ENCODE measurements at regions of chr17 and their contacts with region 1.

Region 1: DNA sequence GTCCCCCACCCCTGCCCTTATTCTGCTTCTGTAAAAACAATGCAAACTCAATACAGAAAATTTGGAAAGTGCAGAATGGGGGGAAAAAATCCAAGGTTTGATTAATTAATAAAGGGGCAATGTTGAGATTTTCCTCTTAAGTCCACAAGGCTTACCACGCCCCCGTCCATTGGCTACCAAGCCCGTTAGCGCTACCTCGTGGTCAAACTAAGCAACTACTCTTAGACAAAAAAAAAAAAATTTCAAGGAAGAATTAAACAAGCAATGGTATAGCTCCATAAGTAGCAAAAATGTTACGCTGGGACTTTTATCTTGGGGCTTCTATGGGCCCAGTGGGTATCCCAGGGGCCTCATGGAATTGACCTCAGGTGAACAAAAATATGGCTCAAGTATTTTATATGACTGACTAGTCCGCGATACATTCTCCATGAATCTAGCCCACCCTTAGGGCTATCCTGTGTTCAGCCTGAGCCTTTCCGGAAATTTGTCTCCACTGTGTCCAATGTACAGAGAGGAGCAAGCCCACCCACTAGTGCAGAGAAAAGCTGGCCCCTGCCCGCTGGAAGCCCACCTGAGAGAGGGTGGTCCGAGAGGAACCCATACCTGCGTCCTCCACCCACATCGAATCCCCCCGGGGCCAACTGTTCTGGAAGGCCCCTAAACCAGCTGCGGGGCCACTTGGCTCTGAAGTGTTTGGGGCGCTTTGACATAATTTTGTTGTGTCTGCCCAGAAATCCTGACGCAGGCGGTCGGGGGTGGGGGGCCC is 19.1 kb upstream of the TEX2 start:
- DNase-seq: no peak
- H3K4me3 ChIP-seq: no peak overlapping the region
- H3K27ac ChIP-seq: no peak overlapping the region
- H3K4me1 ChIP-seq: peaks cover 13 to 23% (median 17%) of the 10 kb centered on the region in 4 donors
- H3K27me3 ChIP-seq: no peaks in the 10 kb centered on the region
- CTCF ChIP-seq: peak; percentile 74 to 81 (median 79)
- EP300 ChIP-seq: no peak
- POLR2A ChIP-seq: no peak

Region 2: GRCh38 chr17:63919311-63919723 is 362.8 kb before region 1 on chr17:
- intact Hi-C with region 1: loop called (anchors 10 kb)
- DNase-seq: no peak
- H3K4me3 ChIP-seq: no peak overlapping the region
- H3K27ac ChIP-seq: no peak overlapping the region
- H3K4me1 ChIP-seq: peaks cover 0 to 7% (median 3%) of the 10 kb centered on the region in 4 donors
- H3K27me3 ChIP-seq: peaks cover 0 to 13% (median 0%) of the 10 kb centered on the region in 4 donors
- CTCF ChIP-seq: peak; percentile 82 to 94 (median 88)
- EP300 ChIP-seq: no peak
- POLR2A ChIP-seq: no peak

Region 3: DNA sequence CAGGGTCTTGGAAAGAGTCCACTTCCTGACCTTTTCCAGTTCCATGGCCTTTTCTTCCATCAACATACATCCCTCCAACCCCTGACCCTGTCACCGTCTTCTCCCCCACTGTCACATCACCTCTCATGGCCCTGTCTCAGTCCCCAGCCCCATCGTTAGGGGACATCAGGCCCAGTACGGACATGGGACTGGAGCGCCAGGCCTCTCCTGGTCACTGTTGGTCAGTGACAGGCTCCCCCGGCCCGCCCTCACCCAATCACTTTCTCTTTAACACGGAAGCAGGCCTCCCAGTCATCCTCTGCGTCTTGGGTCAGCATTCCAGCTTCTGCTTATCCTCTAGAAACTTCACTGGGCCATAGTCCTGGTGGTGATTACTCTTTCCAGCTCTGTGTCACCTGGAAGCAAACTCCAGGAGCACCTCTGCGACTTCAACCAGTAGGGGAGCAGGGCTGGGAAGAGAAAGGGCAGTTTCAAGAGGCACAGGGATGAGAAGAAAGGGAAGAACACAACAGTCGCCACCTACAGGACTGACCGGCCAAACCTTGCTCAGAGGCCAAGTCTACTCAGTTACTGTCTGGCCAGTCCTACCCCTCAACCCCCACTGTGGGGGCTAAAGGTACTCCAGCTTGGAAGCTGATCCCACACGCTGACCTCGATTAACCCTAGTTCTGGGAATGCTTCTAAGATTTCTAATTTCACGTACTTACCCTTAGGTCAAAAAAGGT is 245.8 kb before region 1 on chr17:
- intact Hi-C with region 1: loop called (anchors 10 kb)
- DNase-seq: no peak
- H3K4me3 ChIP-seq: no peak overlapping the region
- H3K27ac ChIP-seq: no peak overlapping the region
- H3K4me1 ChIP-seq: no peaks in the 10 kb centered on the region
- H3K27me3 ChIP-seq: no peaks in the 10 kb centered on the region
- CTCF ChIP-seq: no peak
- EP300 ChIP-seq: no peak
- POLR2A ChIP-seq: no peak

Region 4: DNA sequence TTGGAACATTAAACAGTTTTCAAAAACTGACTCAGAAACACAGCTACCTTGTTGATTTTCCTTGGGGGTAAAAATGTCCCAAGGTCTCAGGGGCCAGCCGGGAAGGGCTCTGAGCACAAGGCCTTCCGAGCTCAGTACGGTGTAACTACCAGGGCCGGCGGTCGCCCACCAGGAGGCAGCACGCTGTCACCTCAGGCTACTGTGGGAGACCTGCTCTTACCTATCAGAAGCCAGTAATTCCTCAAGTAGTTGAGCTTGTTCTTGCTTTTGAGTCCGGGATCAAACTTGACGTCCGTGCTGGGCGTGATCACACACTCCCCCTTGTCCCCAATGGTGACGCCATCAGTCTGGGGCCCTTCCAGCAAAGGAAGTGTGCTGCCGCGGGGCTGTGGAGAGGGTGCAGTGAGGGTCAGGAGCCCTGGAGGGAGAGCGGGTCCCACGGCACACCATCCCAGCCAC is 218.3 kb before region 1 on chr17:
- intact Hi-C with region 1: loop called (anchors 10 kb)
- DNase-seq: no peak
- H3K4me3 ChIP-seq: no peak overlapping the region
- H3K27ac ChIP-seq: no peak overlapping the region
- H3K4me1 ChIP-seq: no peaks in the 10 kb centered on the region
- H3K27me3 ChIP-seq: no peaks in the 10 kb centered on the region
- CTCF ChIP-seq: peak; percentile 56 to 58 (median 57)
- EP300 ChIP-seq: no peak
- POLR2A ChIP-seq: no peak

Region 5: GRCh38 chr17:64145757-64146417 is 136.3 kb before region 1 on chr17:
- intact Hi-C with region 1: loop called (anchors 5 kb)
- DNase-seq: peak; percentile 100
- H3K4me3 ChIP-seq: peak overlapping the region; percentile 69 to 81 (median 79)
- H3K27ac ChIP-seq: peak overlapping the region; percentile 86 to 96 (median 93)
- H3K4me1 ChIP-seq: peaks cover 18 to 37% (median 24%) of the 10 kb centered on the region in 4 donors
- H3K27me3 ChIP-seq: no peaks in the 10 kb centered on the region
- CTCF ChIP-seq: no peak
- EP300 ChIP-seq: no peak
- POLR2A ChIP-seq: peak; percentile 98

Region 6: GRCh38 chr17:64216338-64217248 is 65.6 kb before region 1 on chr17:
- intact Hi-C with region 1: no loop called
- DNase-seq: no peak
- H3K4me3 ChIP-seq: no peak overlapping the region
- H3K27ac ChIP-seq: peak overlapping the region in 2 of 4 donors; percentile 30 to 55
- H3K4me1 ChIP-seq: peaks cover 22 to 34% (median 29%) of the 10 kb centered on the region in 4 donors
- H3K27me3 ChIP-seq: no peaks in the 10 kb centered on the region
- CTCF ChIP-seq: no peak
- EP300 ChIP-seq: no peak
- POLR2A ChIP-seq: no peak

Measured in esophagus muscularis mucosa (tissue), 4 donors.